Heart right ventricle (tissue), 16 donors: ENCODE measurements at regions of chr15 and their contacts with region 1.

Region 1: DNA sequence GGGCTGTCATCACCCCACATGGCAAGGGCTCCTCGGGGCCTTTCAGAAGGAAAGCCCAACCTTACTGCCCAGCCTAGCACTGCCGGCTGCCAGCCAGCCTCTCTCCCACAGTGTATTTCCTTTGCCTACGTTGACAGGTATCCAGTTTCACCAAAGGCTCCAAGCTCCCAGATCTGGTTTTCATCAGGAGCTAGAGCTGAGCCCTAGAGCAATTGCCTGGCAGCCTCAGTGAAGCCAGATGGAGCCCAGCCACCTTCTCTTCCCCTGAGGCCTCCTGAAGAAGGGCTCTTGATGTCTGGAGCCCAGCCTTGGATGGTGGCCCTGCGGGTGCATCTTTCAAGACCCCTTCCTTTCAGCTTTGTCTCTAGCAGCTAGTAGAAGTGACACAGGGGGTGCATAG is 20.3 kb downstream of the CRABP1 start:
- DNase-seq: peak; percentile 33 to 45
- ATAC-seq: peak; percentile 69 to 97 (median 90)
- H3K4me3 ChIP-seq: no peak overlapping the region
- H3K27ac ChIP-seq: no peak overlapping the region
- H3K4me1 ChIP-seq: peaks cover 0 to 7% (median 0%) of the 10 kb centered on the region in 9 donors
- H3K27me3 ChIP-seq: peaks cover 0 to 14% (median 0%) of the 10 kb centered on the region in 7 donors
- CTCF ChIP-seq: no peak

Region 2: GRCh38 chr15:78234515-78235040 is 125.8 kb before region 1 on chr15 and contains the start of gene ACSBG1:
- intact Hi-C with region 1: no loop called
- DNase-seq: no peak
- ATAC-seq: no peak
- H3K4me3 ChIP-seq: no peak within 1 kb of the TSS
- H3K27ac ChIP-seq: no peak within 1 kb of the TSS
- H3K4me1 ChIP-seq: no peaks in the 10 kb centered on the region
- H3K27me3 ChIP-seq: peaks cover 0 to 5% (median 0%) of the 10 kb centered on the region in 7 donors
- CTCF ChIP-seq: no peak
- total RNA-seq, gene ACSBG1: 0.22 to 0.30 TPM in 2 of 10 donors, not detected in the others

Region 3: GRCh38 chr15:78415286-78415685 is 54.9 kb after region 1 on chr15:
- intact Hi-C with region 1: loop called in 1 of 10 experiments (anchors 10 kb)
- DNase-seq: no peak
- ATAC-seq: peak in 1 of 8 donors; percentile 37
- H3K4me3 ChIP-seq: no peak overlapping the region
- H3K27ac ChIP-seq: no peak overlapping the region
- H3K4me1 ChIP-seq: peaks cover 0 to 5% (median 0%) of the 10 kb centered on the region in 9 donors
- H3K27me3 ChIP-seq: peaks cover 0 to 12% (median 0%) of the 10 kb centered on the region in 7 donors
- CTCF ChIP-seq: peak in 6 of 9 donors; percentile 10 to 28 (median 20)

Region 4: DNA sequence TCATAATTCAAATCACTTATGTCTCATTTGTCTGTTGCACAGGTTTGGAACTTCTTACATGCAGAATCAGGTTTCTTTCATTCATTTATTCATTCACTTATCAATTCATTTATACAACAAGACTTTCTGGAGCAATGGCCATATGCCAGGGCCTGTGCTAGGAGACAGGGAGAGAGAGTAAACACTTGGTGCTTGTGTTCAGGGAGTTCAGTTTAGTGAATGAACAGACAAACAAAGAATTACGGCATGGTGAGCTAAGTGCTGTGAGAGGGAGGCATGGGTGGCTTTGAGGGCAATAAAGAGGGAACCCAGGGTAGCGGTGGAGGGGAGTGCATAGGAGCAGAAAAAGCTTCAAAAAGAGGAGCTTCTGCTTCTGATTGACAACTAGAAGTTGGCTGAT is 69.1 kb after region 1 on chr15:
- intact Hi-C with region 1: no loop called
- DNase-seq: no peak
- ATAC-seq: no peak
- H3K4me3 ChIP-seq: no peak overlapping the region
- H3K27ac ChIP-seq: no peak overlapping the region
- H3K4me1 ChIP-seq: peaks cover 0 to 11% (median 0%) of the 10 kb centered on the region in 9 donors
- H3K27me3 ChIP-seq: peaks cover 0 to 24% (median 0%) of the 10 kb centered on the region in 7 donors
- CTCF ChIP-seq: no peak